ENCODE measurements at regions of chr12 and their contacts with region 1.

Region 1: DNA sequence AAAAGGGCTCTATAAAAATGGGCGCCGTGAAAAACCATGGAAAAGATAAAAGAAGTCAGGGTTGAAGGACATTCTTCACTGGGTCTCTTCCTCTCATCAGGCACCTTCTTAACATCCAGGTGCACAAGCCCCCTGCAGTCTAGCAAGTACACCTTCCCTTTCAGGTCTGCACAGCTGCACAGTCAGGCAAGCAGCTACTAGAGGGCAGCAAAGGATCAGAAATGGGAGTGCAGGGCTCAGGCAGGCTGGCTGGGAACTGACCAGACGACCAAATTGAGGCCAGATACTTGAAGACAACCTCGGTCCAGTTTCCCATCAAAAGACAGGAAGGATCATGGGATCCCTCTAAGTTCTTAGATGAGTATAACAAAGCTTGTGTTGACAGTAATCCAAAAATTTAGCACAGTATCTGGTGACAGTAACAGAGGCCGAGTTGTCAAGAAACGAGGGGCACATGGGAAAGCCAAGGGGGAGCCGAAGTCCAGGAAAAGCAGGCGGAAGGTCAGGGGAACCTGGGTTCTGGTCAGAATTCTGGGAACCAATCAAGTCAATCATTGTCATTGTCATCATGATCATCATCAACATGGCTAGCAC is 10.1 kb upstream of the GRIP1 start:
- DNase-seq: peak; percentile 56 to 57
- H3K4me3 ChIP-seq: no peak overlapping the region
- H3K27ac ChIP-seq: no peak overlapping the region
- H3K4me1 ChIP-seq: no peaks in the 10 kb centered on the region
- H3K27me3 ChIP-seq: no peaks in the 10 kb centered on the region
- CTCF ChIP-seq: peak; percentile 77

Region 2: GRCh38 chr12:66533767-66534166 is 155.2 kb before region 1 on chr12:
- CTCF ChIA-PET with region 1: interaction called, 10 read pairs
- POLR2A ChIA-PET with region 1: no interaction called
- intact Hi-C with region 1: no loop called
- DNase-seq: no peak
- H3K4me3 ChIP-seq: no peak overlapping the region
- H3K27ac ChIP-seq: no peak overlapping the region
- H3K4me1 ChIP-seq: no peaks in the 10 kb centered on the region
- H3K27me3 ChIP-seq: no peaks in the 10 kb centered on the region
- CTCF ChIP-seq: no peak

Region 3: DNA sequence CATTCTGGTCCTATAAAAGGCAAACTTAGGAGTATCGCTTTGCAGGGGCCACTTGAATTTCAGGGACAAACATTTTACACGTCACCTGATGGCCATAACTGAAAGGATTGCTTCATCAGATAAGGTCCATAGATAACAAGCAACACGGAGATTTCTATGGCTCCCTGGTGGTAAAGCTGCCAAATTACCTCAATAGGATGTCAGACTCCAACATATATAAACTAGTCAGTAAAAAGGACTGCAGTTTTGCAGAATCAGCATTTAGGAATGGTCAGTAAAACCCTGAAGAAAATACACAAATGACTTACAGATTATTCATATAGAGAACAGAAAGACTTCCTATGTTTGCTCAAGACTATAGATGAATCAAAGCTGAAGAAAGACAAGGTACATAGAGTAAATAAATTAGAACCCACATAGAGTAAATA is 56.0 kb after region 1 on chr12:
- CTCF ChIA-PET with region 1: no interaction called
- POLR2A ChIA-PET with region 1: no interaction called
- intact Hi-C with region 1: no loop called
- DNase-seq: no peak
- H3K4me3 ChIP-seq: no peak overlapping the region
- H3K27ac ChIP-seq: no peak overlapping the region
- H3K4me1 ChIP-seq: peaks cover 7% of the 10 kb centered on the region
- H3K27me3 ChIP-seq: no peaks in the 10 kb centered on the region
- CTCF ChIP-seq: no peak

Region 4: GRCh38 chr12:67222302-67222701 is 533.4 kb after region 1 on chr12:
- CTCF ChIA-PET with region 1: no interaction called
- POLR2A ChIA-PET with region 1: no interaction called
- intact Hi-C with region 1: loop called (anchors 2 kb)
- DNase-seq: peak in 1 of 2 experiments; percentile 4
- H3K4me3 ChIP-seq: no peak overlapping the region
- H3K27ac ChIP-seq: no peak overlapping the region
- H3K4me1 ChIP-seq: no peaks in the 10 kb centered on the region
- H3K27me3 ChIP-seq: no peaks in the 10 kb centered on the region
- CTCF ChIP-seq: peak; percentile 60; the same call in 1 of the 2 replicates

Measured in PC-9 (cell line).